ENCODE measurements at regions of chr22 and their contacts with region 1.

Region 1: DNA sequence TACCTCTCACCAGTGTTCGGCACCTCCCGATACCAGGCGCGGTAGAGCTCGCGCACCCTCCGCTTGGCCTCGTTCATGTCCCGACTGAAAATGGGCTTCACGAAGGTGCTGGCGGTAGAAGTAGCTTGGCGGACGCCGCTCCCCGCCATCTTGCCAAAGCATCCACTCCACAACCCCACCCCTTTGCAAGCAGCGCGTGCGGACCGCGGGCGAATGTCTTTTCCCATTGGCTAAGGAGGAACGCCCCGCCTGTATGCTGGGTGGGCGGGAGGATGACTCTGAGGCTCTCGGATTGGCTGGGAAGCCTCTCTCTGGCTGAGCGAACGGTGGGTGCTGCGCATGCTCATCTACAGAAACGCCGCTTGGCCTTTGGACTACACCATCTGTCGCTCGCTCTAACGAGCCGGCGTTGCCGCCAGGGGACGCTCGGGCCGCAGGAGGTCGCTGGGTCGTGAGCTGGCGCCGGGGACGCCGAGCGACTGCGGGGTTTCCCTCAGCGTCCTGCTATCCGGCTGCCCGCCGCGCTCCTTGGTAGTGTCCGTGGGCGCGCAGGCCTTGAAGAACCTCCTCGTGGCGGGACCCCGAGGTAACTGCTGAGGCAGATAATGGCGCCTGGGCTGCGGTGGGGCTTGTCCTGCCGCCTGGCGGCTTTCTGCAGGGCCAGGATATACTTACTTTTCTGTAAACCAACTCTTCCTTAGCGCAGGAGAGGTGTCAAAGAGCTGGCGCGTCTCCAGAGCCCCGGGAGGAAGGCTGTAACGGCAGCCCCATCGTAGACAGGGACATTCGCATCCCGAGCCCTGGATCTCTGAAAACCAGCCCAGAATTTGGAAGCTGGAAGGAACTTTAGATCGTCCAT is at the start of gene NDUFA6:
- DNase-seq: peak; percentile 99
- H3K4me3 Mint-ChIP-seq: peak within 1 kb of the TSS; percentile 98
- H3K27ac Mint-ChIP-seq: peak within 1 kb of the TSS; percentile 100
- H3K4me1 Mint-ChIP-seq: peaks cover 22% of the 10 kb centered on the region
- H3K27me3 Mint-ChIP-seq: no peaks in the 10 kb centered on the region
- total RNA-seq, gene NDUFA6: 92.4 and 95.1 TPM in 2 replicates

Region 2: DNA sequence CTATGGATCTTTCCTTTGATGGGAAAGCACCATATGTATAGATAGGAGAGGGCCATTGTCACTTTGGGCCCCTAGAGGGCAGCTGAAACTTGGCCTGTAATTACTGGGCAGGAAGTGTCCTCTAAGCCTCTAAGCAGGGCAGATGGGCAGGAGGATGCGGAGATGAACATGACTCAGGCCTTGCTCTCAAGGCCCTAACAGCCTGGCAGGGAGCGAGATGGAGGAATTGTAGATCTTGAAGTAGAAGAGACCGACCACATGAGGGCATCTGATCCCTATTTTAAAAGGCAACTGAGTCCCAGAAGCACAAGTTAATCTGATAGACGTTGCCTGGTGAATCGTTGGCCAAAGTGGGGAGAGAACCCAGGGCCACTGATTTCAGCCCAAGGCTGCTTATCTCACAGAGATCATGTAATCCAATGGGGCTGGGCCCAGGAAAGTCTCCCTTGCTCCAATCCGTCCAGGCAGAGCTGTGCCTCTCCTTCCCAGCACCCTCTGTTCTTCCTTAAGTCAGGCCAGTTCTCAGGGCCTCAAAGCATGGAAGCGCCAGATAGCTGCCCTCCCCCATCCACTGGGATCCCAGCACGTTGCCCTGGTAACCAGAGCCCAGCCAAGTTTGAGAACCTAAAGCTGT is 124.1 kb before region 1 on chr22:
- intact Hi-C with region 1: loop called (anchors 2 kb)
- DNase-seq: peak; percentile 33
- H3K4me3 Mint-ChIP-seq: no peak overlapping the region
- H3K27ac Mint-ChIP-seq: no peak overlapping the region
- H3K4me1 Mint-ChIP-seq: peaks cover 6% of the 10 kb centered on the region
- H3K27me3 Mint-ChIP-seq: peaks cover 3% of the 10 kb centered on the region

Region 3: GRCh38 chr22:42079319-42080251 is 11.2 kb before region 1 on chr22 and contains the start of gene SMDT1:
- intact Hi-C with region 1: loop called (anchors 1 kb)
- DNase-seq: peak; percentile 97
- H3K4me3 Mint-ChIP-seq: peak within 1 kb of the TSS; percentile 97
- H3K27ac Mint-ChIP-seq: peak within 1 kb of the TSS; percentile 93
- H3K4me1 Mint-ChIP-seq: peaks cover 30% of the 10 kb centered on the region
- H3K27me3 Mint-ChIP-seq: no peaks in the 10 kb centered on the region
- total RNA-seq, gene SMDT1: 65.1 and 69.7 TPM in 2 replicates

Region 4: DNA sequence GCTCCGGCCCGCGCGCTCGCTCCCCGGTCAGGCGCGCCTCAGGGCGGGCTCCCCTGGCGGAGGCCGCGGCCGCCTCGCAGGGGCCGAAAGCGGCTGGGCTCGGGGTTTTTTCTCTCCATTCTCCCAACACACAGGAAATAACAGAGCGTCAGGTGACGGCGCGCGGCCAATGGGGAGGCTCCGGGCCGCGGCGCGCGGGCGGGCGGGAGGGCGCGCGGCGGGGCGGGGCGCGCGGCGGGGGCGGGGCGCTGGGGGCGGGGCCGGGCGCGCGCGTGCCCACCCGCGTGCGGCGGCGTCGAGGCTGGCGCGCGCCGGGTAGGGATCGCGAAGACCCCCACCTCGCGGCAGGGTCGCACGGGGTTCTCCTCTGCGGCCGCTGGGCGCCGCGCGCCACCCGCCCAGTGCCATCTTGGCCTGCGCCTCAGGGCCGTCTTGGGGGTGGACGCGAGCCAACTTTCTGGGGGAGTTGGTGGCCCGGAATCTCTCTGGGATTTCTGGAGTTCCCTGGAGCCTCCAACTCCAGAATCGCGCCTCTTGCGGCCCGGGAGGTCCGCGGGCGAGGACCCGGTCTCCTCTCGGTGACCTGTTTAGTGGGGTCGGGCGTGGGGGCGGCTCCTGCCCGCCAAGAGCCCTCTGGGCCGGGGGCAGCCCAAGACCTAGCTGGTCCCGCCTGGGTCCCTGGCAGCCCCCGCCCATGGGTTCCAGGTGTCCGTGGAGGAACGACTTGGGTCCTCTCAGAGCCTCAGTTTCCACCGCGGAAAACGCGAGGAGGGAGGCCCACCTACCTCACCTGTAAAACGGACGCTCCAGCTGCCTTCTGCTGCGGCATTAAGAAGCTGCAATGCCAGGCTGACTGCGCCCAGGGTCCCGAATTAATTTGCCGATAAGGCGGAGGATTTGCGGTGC is 179.9 kb after region 1 on chr22 and contains the start of gene TCF20:
- intact Hi-C with region 1: loop called (anchors 5 kb)
- DNase-seq: peak; percentile 74
- H3K4me3 Mint-ChIP-seq: peak within 1 kb of the TSS; percentile 89
- H3K27ac Mint-ChIP-seq: peak within 1 kb of the TSS; percentile 76
- H3K4me1 Mint-ChIP-seq: peaks cover 17% of the 10 kb centered on the region
- H3K27me3 Mint-ChIP-seq: no peaks in the 10 kb centered on the region
- total RNA-seq, gene TCF20: 70.5 and 74.3 TPM in 2 replicates

Region 5: GRCh38 chr22:42385696-42386095 is 294.9 kb after region 1 on chr22:
- intact Hi-C with region 1: no loop called
- DNase-seq: no peak
- H3K4me3 Mint-ChIP-seq: no peak overlapping the region
- H3K27ac Mint-ChIP-seq: no peak overlapping the region
- H3K4me1 Mint-ChIP-seq: no peaks in the 10 kb centered on the region
- H3K27me3 Mint-ChIP-seq: peaks cover 1% of the 10 kb centered on the region

Region 6: DNA sequence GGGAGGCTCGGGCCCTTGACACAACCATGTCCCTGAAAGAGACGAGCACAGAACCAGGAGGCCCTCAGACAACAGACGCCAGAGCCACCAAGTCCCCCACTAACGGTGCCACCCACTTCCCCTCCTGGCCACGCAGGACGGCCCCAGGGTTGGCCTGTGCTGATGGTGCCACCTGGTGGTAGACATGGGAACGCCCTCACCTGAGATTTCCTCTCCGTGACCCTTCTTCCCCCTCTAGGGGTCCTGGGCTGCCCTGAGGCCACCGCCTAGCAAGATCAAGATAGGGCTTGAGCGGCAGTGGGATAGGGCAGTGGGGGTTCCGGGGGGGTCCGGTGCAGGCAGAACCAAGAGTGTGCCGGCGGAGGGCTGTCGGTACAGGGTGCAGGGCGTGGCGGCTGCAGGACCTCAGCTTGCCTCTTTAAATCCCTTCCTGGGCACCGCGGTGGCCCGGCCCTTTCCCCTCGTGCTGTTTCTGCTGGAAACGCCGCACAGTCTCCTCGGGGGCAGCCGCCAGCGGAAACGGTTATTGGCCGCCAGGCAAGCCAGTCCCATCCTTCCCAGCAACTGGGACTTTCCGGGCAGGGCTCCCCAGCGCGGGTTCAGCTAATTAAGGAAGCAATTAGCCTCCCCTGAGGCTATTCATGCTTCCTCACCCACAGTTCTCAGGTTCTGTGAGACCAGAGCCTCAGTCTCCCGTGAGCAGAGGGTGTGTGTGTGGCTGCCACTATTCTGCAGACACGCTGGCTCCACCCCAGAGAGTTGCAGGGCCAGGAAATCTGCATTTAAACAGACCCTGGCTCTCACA is 346.9 kb after region 1 on chr22:
- intact Hi-C with region 1: loop called (anchors 1 kb)
- DNase-seq: peak; percentile 73
- H3K4me3 Mint-ChIP-seq: peak overlapping the region; percentile 75
- H3K27ac Mint-ChIP-seq: peak overlapping the region; percentile 52
- H3K4me1 Mint-ChIP-seq: peaks cover 22% of the 10 kb centered on the region
- H3K27me3 Mint-ChIP-seq: peaks cover 15% of the 10 kb centered on the region

Region 7: GRCh38 chr22:42444077-42444904 is 353.5 kb after region 1 on chr22:
- intact Hi-C with region 1: loop called (anchors 2 kb)
- DNase-seq: peak; percentile 76
- H3K4me3 Mint-ChIP-seq: peak overlapping the region; percentile 59
- H3K27ac Mint-ChIP-seq: peak overlapping the region; percentile 87
- H3K4me1 Mint-ChIP-seq: peaks cover 27% of the 10 kb centered on the region
- H3K27me3 Mint-ChIP-seq: no peaks in the 10 kb centered on the region

Region 8: GRCh38 chr22:42614312-42615091 is 523.7 kb after region 1 on chr22 and contains the start of gene POLDIP3:
- intact Hi-C with region 1: loop called (anchors 2 kb)
- DNase-seq: peak; percentile 97
- H3K4me3 Mint-ChIP-seq: peak within 1 kb of the TSS; percentile 95
- H3K27ac Mint-ChIP-seq: peak within 1 kb of the TSS; percentile 99
- H3K4me1 Mint-ChIP-seq: peaks cover 35% of the 10 kb centered on the region
- H3K27me3 Mint-ChIP-seq: no peaks in the 10 kb centered on the region
- total RNA-seq, gene POLDIP3: 74.7 and 80.7 TPM in 2 replicates